ENCODE measurements at regions of chr1 and their contacts with region 1.

Region 1: GRCh38 chr1:179867807-179868330 is 9.7 kb downstream of the TOR1AIP2 start:
- DNase-seq: peak; percentile 17 to 58 (median 46)
- ATAC-seq: peak; percentile 85
- H3K4me3 ChIP-seq: no peak overlapping the region
- H3K4me3 Mint-ChIP-seq: no peak overlapping the region
- H3K27ac ChIP-seq: no peak overlapping the region
- H3K27ac Mint-ChIP-seq: peak overlapping the region in 5 of 9 donors; percentile 1 to 54 (median 36)
- H3K4me1 ChIP-seq: peaks cover 0 to 8% of the 10 kb centered on the region in 2 donors
- H3K4me1 Mint-ChIP-seq: peaks cover 12 to 43% (median 25%) of the 10 kb centered on the region in 7 donors
- H3K27me3 ChIP-seq: no peaks in the 10 kb centered on the region
- H3K27me3 Mint-ChIP-seq: no peaks in the 10 kb centered on the region

Region 2: GRCh38 chr1:179129702-179130473 is 738.0 kb before region 1 on chr1:
- CTCF ChIA-PET with region 1: no interaction called
- POLR2A ChIA-PET with region 1: no interaction called
- intact Hi-C with region 1: no loop called
- DNase-seq: peak in 8 of 9 donors; percentile 28 to 83 (median 72)
- ATAC-seq: peak; percentile 95
- H3K4me3 ChIP-seq: peak overlapping the region; percentile 38
- H3K4me3 Mint-ChIP-seq: peak overlapping the region; percentile 63 to 93 (median 80)
- H3K27ac ChIP-seq: peak overlapping the region; percentile 79
- H3K27ac Mint-ChIP-seq: peak overlapping the region; percentile 87 to 96 (median 94)
- H3K4me1 ChIP-seq: peaks cover 4 to 17% of the 10 kb centered on the region in 2 donors
- H3K4me1 Mint-ChIP-seq: peaks cover 3 to 33% (median 22%) of the 10 kb centered on the region in 7 donors
- H3K27me3 ChIP-seq: no peaks in the 10 kb centered on the region
- H3K27me3 Mint-ChIP-seq: no peaks in the 10 kb centered on the region

Region 3: DNA sequence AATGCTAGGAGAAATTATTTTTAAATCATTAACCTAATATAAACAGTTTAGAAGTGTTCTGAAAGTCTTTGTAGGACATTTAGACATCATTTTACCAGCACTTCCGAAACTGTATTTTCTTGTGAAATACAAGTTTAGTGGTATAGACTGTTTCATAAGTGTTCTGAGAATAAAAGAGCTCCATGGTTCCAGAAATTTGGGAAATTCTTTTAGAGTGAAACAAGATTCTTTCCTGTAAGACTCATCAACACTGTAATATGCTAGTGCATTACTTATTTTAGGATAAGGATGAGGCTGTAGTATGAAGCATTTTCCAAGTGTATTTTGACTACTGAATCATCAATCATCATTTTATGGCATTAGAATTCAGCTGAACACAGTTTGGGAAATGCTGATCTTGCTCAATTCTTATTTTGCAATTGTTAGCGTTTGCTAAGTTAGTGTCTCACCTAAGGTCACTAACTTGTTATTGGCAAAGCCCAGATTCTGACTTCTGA is 160.1 kb after region 1 on chr1:
- CTCF ChIA-PET with region 1: interaction called, 3 read pairs
- POLR2A ChIA-PET with region 1: no interaction called
- intact Hi-C with region 1: loop called (anchors 1 to 10 kb)
- DNase-seq: no peak
- ATAC-seq: no peak
- H3K4me3 ChIP-seq: no peak overlapping the region
- H3K4me3 Mint-ChIP-seq: no peak overlapping the region
- H3K27ac ChIP-seq: no peak overlapping the region
- H3K27ac Mint-ChIP-seq: no peak overlapping the region
- H3K4me1 ChIP-seq: no peaks in the 10 kb centered on the region
- H3K4me1 Mint-ChIP-seq: peaks cover 0 to 13% (median 0%) of the 10 kb centered on the region in 7 donors
- H3K27me3 ChIP-seq: no peaks in the 10 kb centered on the region
- H3K27me3 Mint-ChIP-seq: no peaks in the 10 kb centered on the region

Region 4: GRCh38 chr1:180033390-180033789 is 165.5 kb after region 1 on chr1:
- CTCF ChIA-PET with region 1: interaction called, 3 read pairs
- POLR2A ChIA-PET with region 1: no interaction called
- intact Hi-C with region 1: loop called (anchors 1 to 10 kb)
- DNase-seq: no peak
- ATAC-seq: no peak
- H3K4me3 ChIP-seq: no peak overlapping the region
- H3K4me3 Mint-ChIP-seq: no peak overlapping the region
- H3K27ac ChIP-seq: no peak overlapping the region
- H3K27ac Mint-ChIP-seq: no peak overlapping the region
- H3K4me1 ChIP-seq: no peaks in the 10 kb centered on the region
- H3K4me1 Mint-ChIP-seq: peaks cover 0 to 13% (median 0%) of the 10 kb centered on the region in 7 donors
- H3K27me3 ChIP-seq: no peaks in the 10 kb centered on the region
- H3K27me3 Mint-ChIP-seq: no peaks in the 10 kb centered on the region

Region 5: DNA sequence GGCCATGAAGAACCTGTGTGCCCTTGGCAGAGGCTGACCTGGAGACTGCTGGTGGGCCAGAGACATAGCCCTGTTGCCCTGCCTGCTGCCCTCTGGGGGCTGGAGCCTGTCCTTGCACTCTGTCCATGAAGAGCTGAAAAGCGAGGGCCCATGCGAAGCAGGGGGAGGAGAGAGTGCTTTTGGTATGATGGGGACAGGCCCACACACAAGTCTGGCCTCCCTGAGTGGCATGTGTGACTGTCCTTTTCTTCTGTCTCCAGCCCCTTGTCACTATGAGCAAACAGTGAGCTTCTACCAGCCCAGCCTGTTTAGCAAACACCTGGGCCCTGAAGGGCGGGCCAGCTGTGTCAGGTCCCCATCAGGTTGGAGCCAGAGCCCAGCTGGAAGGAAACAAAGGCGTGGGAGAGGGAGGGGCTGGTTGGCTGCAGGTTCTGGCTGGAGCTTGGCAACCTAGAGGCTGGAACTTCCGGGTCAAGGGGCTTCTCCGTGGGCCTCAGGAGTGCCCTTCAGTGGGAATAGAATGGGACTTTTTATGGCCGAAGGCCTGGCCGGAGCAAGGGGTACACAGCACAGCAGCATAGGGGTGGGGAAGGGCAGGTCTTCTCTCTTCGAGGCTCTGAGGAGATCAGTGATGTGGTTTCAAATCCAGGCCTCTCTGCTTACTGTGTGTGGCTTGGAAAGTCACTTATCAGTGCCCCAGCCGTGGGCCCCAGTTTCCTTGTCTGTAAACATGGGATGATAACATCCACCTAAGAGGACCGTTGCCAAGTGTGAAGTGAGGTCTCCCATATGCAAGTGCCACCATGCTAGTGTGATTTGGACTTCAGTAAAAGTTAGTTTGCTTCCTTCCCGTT is 301.1 kb after region 1 on chr1:
- CTCF ChIA-PET with region 1: interaction called, 4 read pairs
- POLR2A ChIA-PET with region 1: no interaction called
- intact Hi-C with region 1: loop called in 1 of 2 experiments (anchors 2 kb)
- DNase-seq: peak in 2 of 9 donors; percentile 16 to 27
- ATAC-seq: peak; percentile 83
- H3K4me3 ChIP-seq: no peak overlapping the region
- H3K4me3 Mint-ChIP-seq: no peak overlapping the region
- H3K27ac ChIP-seq: no peak overlapping the region
- H3K27ac Mint-ChIP-seq: peak overlapping the region in 2 of 9 donors; percentile 17 to 28
- H3K4me1 ChIP-seq: no peaks in the 10 kb centered on the region
- H3K4me1 Mint-ChIP-seq: peaks cover 0 to 13% (median 4%) of the 10 kb centered on the region in 7 donors
- H3K27me3 ChIP-seq: no peaks in the 10 kb centered on the region
- H3K27me3 Mint-ChIP-seq: no peaks in the 10 kb centered on the region

Region 6: GRCh38 chr1:180178511-180179161 is 310.8 kb after region 1 on chr1:
- CTCF ChIA-PET with region 1: interaction called, 13 read pairs
- POLR2A ChIA-PET with region 1: no interaction called
- intact Hi-C with region 1: loop called (anchors 1 kb)
- DNase-seq: peak; percentile 35 to 68 (median 55)
- ATAC-seq: peak; percentile 73
- H3K4me3 ChIP-seq: no peak overlapping the region
- H3K4me3 Mint-ChIP-seq: no peak overlapping the region
- H3K27ac ChIP-seq: no peak overlapping the region
- H3K27ac Mint-ChIP-seq: peak overlapping the region in 2 of 9 donors; percentile 9 to 55
- H3K4me1 ChIP-seq: no peaks in the 10 kb centered on the region
- H3K4me1 Mint-ChIP-seq: peaks cover 0 to 4% (median 0%) of the 10 kb centered on the region in 7 donors
- H3K27me3 ChIP-seq: no peaks in the 10 kb centered on the region
- H3K27me3 Mint-ChIP-seq: no peaks in the 10 kb centered on the region

Region 7: GRCh38 chr1:180415985-180416633 is 548.2 kb after region 1 on chr1:
- CTCF ChIA-PET with region 1: no interaction called
- POLR2A ChIA-PET with region 1: no interaction called
- intact Hi-C with region 1: loop called in 1 of 2 experiments (anchors 5 kb)
- DNase-seq: peak in 1 of 9 donors; percentile 3
- ATAC-seq: peak; percentile 42
- H3K4me3 ChIP-seq: no peak overlapping the region
- H3K4me3 Mint-ChIP-seq: no peak overlapping the region
- H3K27ac ChIP-seq: no peak overlapping the region
- H3K27ac Mint-ChIP-seq: no peak overlapping the region
- H3K4me1 ChIP-seq: no peaks in the 10 kb centered on the region
- H3K4me1 Mint-ChIP-seq: peaks cover 0 to 2% (median 0%) of the 10 kb centered on the region in 7 donors
- H3K27me3 ChIP-seq: no peaks in the 10 kb centered on the region
- H3K27me3 Mint-ChIP-seq: no peaks in the 10 kb centered on the region

Measured in naive thymus-derived CD4-positive, alpha-beta T cell (primary cell).